Activated CD4-positive, alpha-beta memory T cell treated with anti-CD3 and anti-CD28 coated beads, Interleukin-2, amount 10 ng/mL, durations not matched to agents 7 days and 5 days (primary cell): ENCODE measurements at regions of chr2 and their contacts with region 1.

Region 1: DNA sequence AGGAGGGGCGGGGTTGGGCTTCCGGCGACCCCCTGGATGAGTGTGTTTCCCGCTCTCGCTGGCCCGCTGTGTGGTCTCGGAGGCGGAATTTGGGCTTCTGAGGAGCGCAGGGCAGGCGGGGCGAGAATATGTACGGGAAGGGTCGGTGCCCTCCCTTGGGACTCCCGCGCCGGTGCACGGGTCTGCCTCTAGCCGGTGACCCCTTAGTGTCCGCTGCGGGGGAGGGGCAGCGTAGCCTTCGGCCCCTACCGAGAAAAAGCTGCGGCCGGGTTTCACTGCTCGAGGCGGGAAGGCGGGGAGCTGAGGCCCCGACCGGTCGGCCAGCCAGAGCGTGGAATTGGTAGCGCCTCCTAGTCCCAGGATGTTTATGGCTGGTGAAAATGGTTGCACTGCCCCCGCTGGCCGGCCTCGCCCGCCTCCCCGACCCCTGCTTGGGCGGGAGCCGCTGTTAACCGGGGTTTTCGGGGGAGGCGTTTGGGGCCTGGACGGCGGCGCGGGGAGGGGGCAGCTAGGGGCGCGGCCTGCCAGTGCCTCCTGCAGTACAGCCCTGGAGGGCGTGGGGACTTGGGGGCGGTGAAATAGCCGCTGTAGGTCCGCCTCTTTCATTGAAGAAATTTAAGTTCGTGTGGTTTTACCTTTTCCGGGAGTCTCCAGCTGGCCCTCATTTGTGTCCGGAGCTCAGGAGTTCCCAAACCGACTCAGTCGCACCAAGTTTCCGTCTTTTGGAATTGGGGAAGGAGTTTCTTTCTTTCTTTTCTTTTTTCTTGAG is at the start of gene UGP2:
- DNase-seq: peak; percentile 92
- H3K4me3 Mint-ChIP-seq: peak within 1 kb of the TSS; percentile 99
- H3K27ac Mint-ChIP-seq: peak within 1 kb of the TSS; percentile 95
- H3K4me1 Mint-ChIP-seq: peaks cover 51% of the 10 kb centered on the region
- H3K27me3 Mint-ChIP-seq: no peaks in the 10 kb centered on the region
- total RNA-seq, gene UGP2: 180 TPM

Region 2: GRCh38 chr2:63698825-63699548 is 142.5 kb before region 1 on chr2:
- CTCF ChIA-PET with region 1: no interaction called
- POLR2A ChIA-PET with region 1: interaction called, 11 read pairs
- DNase-seq: peak; percentile 18
- H3K4me3 Mint-ChIP-seq: no peak overlapping the region
- H3K27ac Mint-ChIP-seq: no peak overlapping the region
- H3K4me1 Mint-ChIP-seq: no peaks in the 10 kb centered on the region
- H3K27me3 Mint-ChIP-seq: no peaks in the 10 kb centered on the region

Region 3: GRCh38 chr2:63827749-63828148 is 13.7 kb before region 1 on chr2:
- CTCF ChIA-PET with region 1: no interaction called
- POLR2A ChIA-PET with region 1: interaction called, 11 read pairs
- DNase-seq: no peak
- H3K4me3 Mint-ChIP-seq: no peak overlapping the region
- H3K27ac Mint-ChIP-seq: no peak overlapping the region
- H3K4me1 Mint-ChIP-seq: no peaks in the 10 kb centered on the region
- H3K27me3 Mint-ChIP-seq: peaks cover 33% of the 10 kb centered on the region

Region 4: DNA sequence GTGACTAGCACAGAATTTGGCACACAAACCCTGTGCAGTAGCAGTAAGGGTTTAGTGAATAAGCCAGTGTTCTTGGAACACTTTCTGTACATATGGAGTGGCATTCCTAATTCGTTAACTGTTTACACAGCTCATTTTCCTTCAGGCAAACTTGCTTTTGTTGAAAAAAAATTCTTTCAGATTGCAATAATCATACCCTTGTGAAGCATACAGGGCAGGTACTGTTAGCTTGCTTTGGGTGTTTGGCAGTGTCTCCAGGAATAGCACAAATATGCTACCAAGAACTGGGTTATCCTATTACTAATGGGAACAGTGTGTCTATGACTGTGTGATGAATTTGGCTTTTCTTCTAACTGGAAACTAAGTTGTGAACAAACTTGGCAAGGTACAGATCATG is 33.7 kb after region 1 on chr2:
- CTCF ChIA-PET with region 1: no interaction called
- POLR2A ChIA-PET with region 1: interaction called, 17 read pairs
- DNase-seq: no peak
- H3K4me3 Mint-ChIP-seq: no peak overlapping the region
- H3K27ac Mint-ChIP-seq: no peak overlapping the region
- H3K4me1 Mint-ChIP-seq: peaks cover 24% of the 10 kb centered on the region
- H3K27me3 Mint-ChIP-seq: no peaks in the 10 kb centered on the region

Region 5: DNA sequence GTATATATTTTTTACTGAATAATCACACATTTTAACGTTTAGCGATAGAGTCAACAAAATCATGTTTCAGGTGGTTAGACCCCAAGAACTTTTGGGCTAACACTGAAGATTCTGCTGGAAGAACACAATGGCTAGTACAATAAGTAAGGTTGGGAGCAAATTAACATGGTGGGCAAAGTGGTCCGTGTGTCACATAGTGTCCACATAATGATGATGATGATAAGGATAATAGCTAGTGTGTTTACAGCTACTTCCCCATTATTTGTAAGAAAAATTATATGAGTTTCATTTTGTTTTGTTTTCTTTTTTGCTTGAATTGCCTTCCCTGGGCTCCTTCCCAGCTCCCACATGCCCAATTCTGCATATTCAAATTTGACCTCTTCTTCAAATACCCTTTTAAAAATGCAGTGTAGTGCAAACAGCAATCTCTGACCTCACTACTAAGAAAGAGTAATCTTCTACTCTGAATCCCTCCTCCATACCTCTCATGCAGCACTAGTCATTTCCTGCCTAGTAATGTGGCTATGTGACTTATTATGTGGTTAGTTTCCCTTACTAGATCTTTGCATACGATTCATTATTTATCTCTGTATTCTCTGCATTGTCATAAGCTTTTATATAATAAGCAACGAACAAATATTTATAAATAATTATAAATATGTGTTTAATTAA is 194.7 kb after region 1 on chr2:
- CTCF ChIA-PET with region 1: no interaction called
- POLR2A ChIA-PET with region 1: interaction called, 29 read pairs
- DNase-seq: peak; percentile 25
- H3K4me3 Mint-ChIP-seq: peak overlapping the region; percentile 44
- H3K27ac Mint-ChIP-seq: peak overlapping the region; percentile 92
- H3K4me1 Mint-ChIP-seq: peaks cover 54% of the 10 kb centered on the region
- H3K27me3 Mint-ChIP-seq: no peaks in the 10 kb centered on the region